Calu3 (cell line): ENCODE measurements at regions of chr5 and their contacts with region 1.

Region 1: GRCh38 chr5:1392801-1393565 is 48.1 kb upstream of the CLPTM1L start:
- DNase-seq: no peak
- H3K4me3 Mint-ChIP-seq: no peak overlapping the region
- H3K27ac Mint-ChIP-seq: no peak overlapping the region
- H3K4me1 Mint-ChIP-seq: no peaks in the 10 kb centered on the region
- H3K27me3 Mint-ChIP-seq: peaks cover 83% of the 10 kb centered on the region
- CTCF ChIP-seq: no peak

Region 2: GRCh38 chr5:1460054-1460682 is 67.2 kb after region 1 on chr5:
- CTCF ChIA-PET with region 1: no interaction called
- intact Hi-C with region 1: loop called (anchors 2 kb)
- DNase-seq: no peak
- H3K4me3 Mint-ChIP-seq: no peak overlapping the region
- H3K27ac Mint-ChIP-seq: no peak overlapping the region
- H3K4me1 Mint-ChIP-seq: no peaks in the 10 kb centered on the region
- H3K27me3 Mint-ChIP-seq: no peaks in the 10 kb centered on the region
- CTCF ChIP-seq: no peak